ENCODE measurements at regions of chr6 and their contacts with region 1.

Region 1: GRCh38 chr6:113994918-113995342 is 24.0 kb upstream of the HDAC2 start:
- DNase-seq: peak; percentile 83 to 84
- H3K4me3 ChIP-seq: no peak overlapping the region
- H3K4me3 Mint-ChIP-seq: peak overlapping the region; percentile 63
- H3K27ac Mint-ChIP-seq: peak overlapping the region; percentile 77
- H3K4me1 ChIP-seq: peaks cover 28% of the 10 kb centered on the region
- H3K4me1 Mint-ChIP-seq: peaks cover 33% of the 10 kb centered on the region
- H3K27me3 ChIP-seq: no peaks in the 10 kb centered on the region
- H3K27me3 Mint-ChIP-seq: no peaks in the 10 kb centered on the region
- CTCF ChIP-seq: peak; percentile 78 to 85

Region 2: DNA sequence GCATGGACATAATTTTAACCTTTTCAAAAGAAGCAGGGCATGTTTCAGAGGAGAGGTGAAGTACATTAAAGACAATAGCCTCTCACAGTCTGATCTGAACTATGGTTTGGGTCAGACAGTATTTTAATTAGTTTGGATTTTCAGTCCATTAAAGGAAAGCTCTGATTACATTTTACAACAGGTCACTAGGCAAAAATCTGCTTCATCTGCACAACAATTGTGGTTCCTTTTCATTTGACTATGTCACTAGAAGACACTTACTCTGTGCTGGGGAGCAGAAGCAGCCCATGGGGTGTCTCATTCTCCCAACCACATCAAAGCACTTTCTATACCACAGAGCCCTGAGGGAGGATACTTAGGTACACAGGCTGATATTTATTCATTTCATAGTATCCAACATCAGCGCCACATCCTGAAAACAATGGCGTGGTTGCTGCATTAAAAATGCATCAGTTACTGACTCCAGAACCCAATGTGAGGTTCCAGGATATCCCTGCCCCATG is 12.6 kb after region 1 on chr6:
- CTCF ChIA-PET with region 1: interaction called, 12 read pairs
- POLR2A ChIA-PET with region 1: interaction called, 6 read pairs
- intact Hi-C with region 1: loop called (anchors 1 kb)
- DNase-seq: no peak
- H3K4me3 ChIP-seq: no peak overlapping the region
- H3K4me3 Mint-ChIP-seq: no peak overlapping the region
- H3K27ac Mint-ChIP-seq: no peak overlapping the region
- H3K4me1 ChIP-seq: peaks cover 26% of the 10 kb centered on the region
- H3K4me1 Mint-ChIP-seq: peaks cover 6% of the 10 kb centered on the region
- H3K27me3 ChIP-seq: no peaks in the 10 kb centered on the region
- H3K27me3 Mint-ChIP-seq: no peaks in the 10 kb centered on the region
- CTCF ChIP-seq: no peak

Region 3: DNA sequence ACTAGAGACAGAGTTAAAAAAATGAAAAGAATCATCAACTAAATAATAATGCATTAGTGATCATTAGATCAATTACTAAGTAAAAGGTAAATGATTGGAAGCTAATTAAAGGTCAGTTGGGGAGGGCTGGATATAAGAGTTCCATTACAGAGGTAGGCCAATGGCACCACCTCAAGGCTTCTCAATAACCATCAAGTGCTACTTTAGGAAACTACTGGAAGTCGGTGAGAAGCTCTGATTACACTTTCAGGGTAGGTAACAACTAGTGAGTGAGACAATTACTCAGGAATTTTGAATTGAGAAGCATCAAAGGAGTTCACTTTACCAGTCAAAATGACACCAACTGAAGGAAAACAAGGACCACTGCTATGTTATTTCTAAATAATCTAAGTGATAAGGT is 66.2 kb after region 1 on chr6:
- CTCF ChIA-PET with region 1: interaction called, 28 read pairs
- POLR2A ChIA-PET with region 1: interaction called, 3 read pairs
- intact Hi-C with region 1: loop called (anchors 1 kb)
- DNase-seq: no peak
- H3K4me3 ChIP-seq: no peak overlapping the region
- H3K4me3 Mint-ChIP-seq: no peak overlapping the region
- H3K27ac Mint-ChIP-seq: no peak overlapping the region
- H3K4me1 ChIP-seq: peaks cover 16% of the 10 kb centered on the region
- H3K4me1 Mint-ChIP-seq: peaks cover 12% of the 10 kb centered on the region
- H3K27me3 ChIP-seq: no peaks in the 10 kb centered on the region
- H3K27me3 Mint-ChIP-seq: no peaks in the 10 kb centered on the region
- CTCF ChIP-seq: no peak

Region 4: GRCh38 chr6:114108119-114109002 is 113.4 kb after region 1 on chr6:
- CTCF ChIA-PET with region 1: interaction called, 54 read pairs
- POLR2A ChIA-PET with region 1: interaction called, 4 read pairs
- intact Hi-C with region 1: loop called (anchors 1 kb)
- DNase-seq: peak; percentile 85 to 87
- H3K4me3 ChIP-seq: no peak overlapping the region
- H3K4me3 Mint-ChIP-seq: no peak overlapping the region
- H3K27ac Mint-ChIP-seq: no peak overlapping the region
- H3K4me1 ChIP-seq: peaks cover 5% of the 10 kb centered on the region; the same call in 1 of the 2 replicates
- H3K4me1 Mint-ChIP-seq: peaks cover 13% of the 10 kb centered on the region
- H3K27me3 ChIP-seq: no peaks in the 10 kb centered on the region
- H3K27me3 Mint-ChIP-seq: no peaks in the 10 kb centered on the region
- CTCF ChIP-seq: peak; percentile 76 to 79

Region 5: GRCh38 chr6:114304304-114304887 is 309.5 kb after region 1 on chr6:
- CTCF ChIA-PET with region 1: interaction called, 21 read pairs
- POLR2A ChIA-PET with region 1: no interaction called
- intact Hi-C with region 1: loop called (anchors 1 kb)
- DNase-seq: peak in 1 of 2 experiments; percentile 10
- H3K4me3 ChIP-seq: no peak overlapping the region
- H3K4me3 Mint-ChIP-seq: no peak overlapping the region
- H3K27ac Mint-ChIP-seq: no peak overlapping the region
- H3K4me1 ChIP-seq: no peaks in the 10 kb centered on the region
- H3K4me1 Mint-ChIP-seq: no peaks in the 10 kb centered on the region
- H3K27me3 ChIP-seq: no peaks in the 10 kb centered on the region
- H3K27me3 Mint-ChIP-seq: no peaks in the 10 kb centered on the region
- CTCF ChIP-seq: peak; percentile 44 to 52

Region 6: GRCh38 chr6:114839019-114839418 is 844.1 kb after region 1 on chr6:
- CTCF ChIA-PET with region 1: no interaction called
- POLR2A ChIA-PET with region 1: no interaction called
- intact Hi-C with region 1: loop called (anchors 1 kb)
- DNase-seq: peak; percentile 39 to 52
- H3K4me3 ChIP-seq: no peak overlapping the region
- H3K4me3 Mint-ChIP-seq: no peak overlapping the region
- H3K27ac Mint-ChIP-seq: no peak overlapping the region
- H3K4me1 ChIP-seq: peaks cover 44% of the 10 kb centered on the region
- H3K4me1 Mint-ChIP-seq: peaks cover 9% of the 10 kb centered on the region
- H3K27me3 ChIP-seq: no peaks in the 10 kb centered on the region
- H3K27me3 Mint-ChIP-seq: no peaks in the 10 kb centered on the region
- CTCF ChIP-seq: no peak

Measured in Caco-2 (cell line).